Activated CD4-positive, alpha-beta memory T cell treated with anti-CD3 and anti-CD28 coated beads for 36 hours (primary cell): ENCODE measurements at regions of chr5 and their contacts with region 1.

Region 1: GRCh38 chr5:175059687-175060211 is 335.4 kb downstream of the MSX2 start:
- DNase-seq: peak; percentile 70
- H3K4me3 Mint-ChIP-seq: peak overlapping the region; percentile 52
- H3K27ac Mint-ChIP-seq: peak overlapping the region; percentile 28
- H3K4me1 Mint-ChIP-seq: peaks cover 17% of the 10 kb centered on the region
- H3K27me3 Mint-ChIP-seq: no peaks in the 10 kb centered on the region

Region 2: DNA sequence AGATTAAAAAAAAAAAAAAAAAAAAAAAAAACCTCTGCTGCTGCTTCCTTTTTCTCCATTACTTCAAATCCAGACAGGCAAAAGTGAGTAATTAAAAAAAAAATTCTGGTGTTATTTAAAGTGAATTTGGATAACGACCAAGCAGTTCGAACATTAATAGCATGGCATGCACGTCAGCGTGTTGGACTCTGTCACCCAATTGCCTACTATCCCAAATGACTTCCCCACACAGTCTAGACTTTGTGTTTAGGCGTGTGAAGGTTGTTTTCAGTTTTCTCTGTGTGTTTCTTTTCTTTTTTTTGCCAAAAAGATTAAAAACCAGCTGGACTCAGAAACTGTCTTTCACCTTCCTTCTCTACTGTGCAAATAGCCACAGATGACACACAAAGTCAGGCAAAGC is 13.9 kb before region 1 on chr5:
- CTCF ChIA-PET with region 1: no interaction called
- POLR2A ChIA-PET with region 1: no interaction called
- intact Hi-C with region 1: no loop called
- DNase-seq: no peak
- H3K4me3 Mint-ChIP-seq: no peak overlapping the region
- H3K27ac Mint-ChIP-seq: no peak overlapping the region
- H3K4me1 Mint-ChIP-seq: no peaks in the 10 kb centered on the region
- H3K27me3 Mint-ChIP-seq: peaks cover 1% of the 10 kb centered on the region

Region 3: DNA sequence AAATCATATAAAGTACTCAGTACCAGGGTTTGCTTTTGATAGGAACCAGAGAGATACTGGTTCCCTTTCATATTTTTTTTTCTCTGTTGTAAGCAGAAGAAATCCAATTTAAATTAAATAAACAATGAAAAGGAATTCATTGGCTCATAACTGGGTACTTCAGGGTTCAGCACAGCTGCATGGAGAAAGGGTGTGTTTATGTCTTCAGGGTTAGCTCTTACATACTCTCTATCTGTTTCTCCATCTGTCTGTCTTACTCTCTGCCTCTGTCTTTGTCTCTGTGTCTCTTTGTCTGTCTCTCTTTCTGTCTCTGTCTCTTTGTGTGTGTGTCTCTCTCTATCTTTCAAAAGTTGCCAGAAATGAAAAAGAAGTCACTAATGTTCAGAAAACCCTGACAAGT is 10.5 kb after region 1 on chr5:
- CTCF ChIA-PET with region 1: no interaction called
- POLR2A ChIA-PET with region 1: no interaction called
- intact Hi-C with region 1: loop called (anchors 2 kb)
- DNase-seq: no peak
- H3K4me3 Mint-ChIP-seq: no peak overlapping the region
- H3K27ac Mint-ChIP-seq: no peak overlapping the region
- H3K4me1 Mint-ChIP-seq: no peaks in the 10 kb centered on the region
- H3K27me3 Mint-ChIP-seq: peaks cover 2% of the 10 kb centered on the region

Region 4: GRCh38 chr5:175235251-175235960 is 175.7 kb after region 1 on chr5:
- CTCF ChIA-PET with region 1: no interaction called
- POLR2A ChIA-PET with region 1: no interaction called
- intact Hi-C with region 1: no loop called
- DNase-seq: no peak
- H3K4me3 Mint-ChIP-seq: no peak overlapping the region
- H3K27ac Mint-ChIP-seq: no peak overlapping the region
- H3K4me1 Mint-ChIP-seq: no peaks in the 10 kb centered on the region
- H3K27me3 Mint-ChIP-seq: peaks cover 19% of the 10 kb centered on the region